ENCODE measurements at regions of chr9 and their contacts with region 1.

Region 1: GRCh38 chr9:136122425-136123383 is 4.0 kb upstream of the TMEM250 start:
- DNase-seq: peak; percentile 46 to 86
- H3K4me3 ChIP-seq: no peak overlapping the region
- H3K4me1 ChIP-seq: peaks cover under 1% of the 10 kb centered on the region
- H3K27me3 ChIP-seq: peaks cover 5% of the 10 kb centered on the region

Region 2: DNA sequence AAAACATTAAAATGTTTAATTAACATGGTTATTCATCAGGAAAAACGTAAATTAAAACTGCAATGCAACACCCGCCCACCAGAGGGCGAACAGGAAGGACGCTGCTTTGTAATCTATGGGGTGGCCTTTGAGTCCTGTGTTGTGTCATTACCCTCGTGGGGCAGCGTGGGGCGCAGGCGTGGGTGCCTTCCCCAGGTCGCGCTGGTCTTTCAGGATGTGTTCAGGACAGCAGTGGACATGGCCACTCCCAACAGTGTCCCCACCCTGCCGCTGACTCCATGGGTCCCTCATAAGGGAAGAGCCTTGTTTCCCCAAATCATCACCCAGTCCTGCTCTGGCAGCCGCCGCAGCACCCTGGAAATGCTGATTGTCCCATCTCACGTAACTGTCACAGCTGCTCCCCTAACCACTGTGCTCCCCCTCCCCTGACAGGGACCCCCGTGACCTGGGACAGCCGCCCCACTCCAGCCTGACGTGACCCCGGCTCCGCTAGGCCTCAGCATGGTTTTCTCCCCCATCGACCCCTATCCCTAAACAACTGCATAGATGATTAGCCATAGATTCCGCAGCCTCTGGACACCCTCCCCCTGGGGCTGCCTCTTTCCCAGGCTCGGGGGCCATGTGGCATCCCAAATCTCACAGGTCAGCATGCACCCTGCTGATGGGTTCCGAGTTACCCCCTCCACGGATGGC is 519.8 kb before region 1 on chr9:
- in situ Hi-C with region 1: loop called (anchors 10 kb)
- DNase-seq: peak; percentile 10 to 72
- H3K4me3 ChIP-seq: no peak overlapping the region
- H3K4me1 ChIP-seq: no peaks in the 10 kb centered on the region
- H3K27me3 ChIP-seq: no peaks in the 10 kb centered on the region

Region 3: GRCh38 chr9:135864447-135865049 is 258.2 kb before region 1 on chr9:
- in situ Hi-C with region 1: loop called (anchors 5 kb)
- DNase-seq: peak; percentile 35 to 85
- H3K4me3 ChIP-seq: no peak overlapping the region
- H3K4me1 ChIP-seq: no peaks in the 10 kb centered on the region
- H3K27me3 ChIP-seq: no peaks in the 10 kb centered on the region

Region 4: GRCh38 chr9:136567651-136568287 is 445.1 kb after region 1 on chr9:
- in situ Hi-C with region 1: no loop called
- DNase-seq: peak in 1 of 2 experiments; percentile 41
- H3K4me3 ChIP-seq: no peak overlapping the region
- H3K4me1 ChIP-seq: peaks cover 24% of the 10 kb centered on the region
- H3K27me3 ChIP-seq: no peaks in the 10 kb centered on the region